ENCODE measurements at regions of chr14 and their contacts with region 1.

Region 1: DNA sequence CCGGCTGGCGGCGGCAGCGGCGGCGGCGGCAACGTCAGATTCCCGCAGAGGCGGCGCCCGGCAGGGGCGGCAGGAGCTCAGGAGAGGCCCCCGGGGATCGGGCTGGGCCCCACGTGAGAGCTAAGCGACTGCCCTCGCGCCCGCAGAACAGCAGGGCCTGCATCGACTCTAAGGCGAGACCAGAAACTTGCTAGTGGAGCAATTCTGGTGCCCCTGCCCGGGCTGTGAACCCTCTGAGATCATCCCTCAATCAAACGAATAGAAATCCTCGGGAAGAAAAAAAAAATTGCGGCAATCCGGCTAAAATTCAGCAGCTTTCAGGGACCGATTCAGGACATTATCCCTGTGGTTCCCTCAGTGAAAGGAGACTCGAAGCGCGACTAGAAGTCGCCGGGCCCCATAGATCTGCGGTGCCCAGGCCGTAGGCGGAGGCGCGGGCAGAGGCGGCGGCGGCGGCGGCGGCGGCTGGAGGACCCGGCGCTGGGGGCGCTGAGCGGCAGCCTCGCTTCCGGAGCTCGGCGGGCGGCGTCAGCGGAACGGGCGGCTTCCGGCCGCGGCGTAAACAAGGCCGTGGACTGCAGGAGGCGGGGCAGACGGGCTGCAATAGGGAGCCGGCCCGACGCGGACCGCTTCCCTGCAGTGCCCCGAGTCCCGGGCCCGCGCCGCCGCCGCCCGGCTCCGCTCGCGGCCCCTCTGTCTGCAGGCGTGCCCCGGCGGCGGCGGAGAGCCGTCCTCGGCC is at the start of gene KLHDC2:
- DNase-seq: peak; percentile 99
- H3K4me3 ChIP-seq: peak within 1 kb of the TSS; percentile 68 to 89 (median 83)
- H3K27ac ChIP-seq: peak within 1 kb of the TSS; percentile 89 to 100 (median 98)
- H3K4me1 ChIP-seq: peaks cover 16 to 46% (median 30%) of the 10 kb centered on the region in 6 donors
- H3K27me3 ChIP-seq: no peaks in the 10 kb centered on the region
- CTCF ChIP-seq: peak in 7 of 11 experiments; percentile 5 to 69 (median 44)
- POLR2A ChIP-seq: peak; percentile 14 to 94 (median 35)
- total RNA-seq, gene KLHDC2: 31.9 to 66.8 (median 47.9) TPM

Region 2: GRCh38 chr14:49633640-49634546 is 133.8 kb before region 1 on chr14:
- intact Hi-C with region 1: loop called (anchors 10 kb)
- DNase-seq: peak; percentile 99
- H3K4me3 ChIP-seq: peak overlapping the region; percentile 90 to 99 (median 97)
- H3K27ac ChIP-seq: peak overlapping the region; percentile 94 to 99 (median 98)
- H3K4me1 ChIP-seq: peaks cover 20 to 89% (median 51%) of the 10 kb centered on the region in 6 donors
- H3K27me3 ChIP-seq: no peaks in the 10 kb centered on the region
- CTCF ChIP-seq: peak; percentile 74 to 95 (median 90)
- POLR2A ChIP-seq: peak; percentile 6 to 81 (median 62)

Region 3: DNA sequence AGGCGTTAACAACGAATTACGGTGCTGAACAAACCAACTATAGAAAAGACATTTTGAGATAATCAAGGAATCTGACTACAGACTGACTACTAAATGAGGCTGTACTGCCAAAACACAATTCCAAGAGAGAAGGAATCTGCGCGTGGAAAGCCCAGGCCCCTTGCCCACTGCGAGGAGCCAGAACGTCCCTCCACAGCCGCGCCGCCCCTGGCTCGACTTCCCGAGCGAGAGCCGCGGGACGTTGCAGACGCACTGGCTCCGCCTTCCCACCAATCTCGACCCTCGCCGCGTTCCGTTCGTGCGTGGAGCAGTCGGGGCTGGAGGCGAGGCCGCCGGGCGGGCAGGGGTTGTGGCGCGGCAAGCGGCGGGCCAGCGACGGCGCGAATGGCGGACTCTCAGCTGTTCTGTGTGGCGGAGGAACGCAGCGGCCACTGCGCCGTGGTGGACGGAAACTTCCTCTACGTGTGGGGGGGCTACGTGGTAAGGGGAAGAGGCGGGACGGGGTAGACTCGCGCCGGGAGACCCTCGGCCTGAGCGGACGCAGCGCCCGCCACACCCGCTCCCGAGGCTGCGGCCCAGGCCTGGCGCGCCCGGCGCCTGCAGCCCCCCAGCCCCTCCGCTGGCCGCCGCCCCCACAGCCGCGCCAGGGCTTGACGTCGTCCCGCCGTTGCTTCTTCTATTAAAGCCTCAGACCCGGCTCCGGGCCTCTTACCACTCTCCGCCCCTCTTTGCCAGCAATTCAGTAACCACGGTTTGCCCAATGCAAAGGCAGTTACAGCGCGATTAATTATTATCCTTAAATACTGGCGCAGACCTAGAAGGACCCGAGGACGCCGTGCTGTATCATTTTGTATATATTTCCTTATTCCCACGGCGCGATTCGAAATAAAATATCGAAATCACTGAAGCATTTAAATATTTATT is 74.7 kb before region 1 on chr14 and contains the start of gene KLHDC1:
- intact Hi-C with region 1: loop called (anchors 10 kb)
- DNase-seq: peak; percentile 97
- H3K4me3 ChIP-seq: peak within 1 kb of the TSS; percentile 45 to 92 (median 68)
- H3K27ac ChIP-seq: peak within 1 kb of the TSS; percentile 90 to 97 (median 94)
- H3K4me1 ChIP-seq: peaks cover 4 to 48% (median 23%) of the 10 kb centered on the region in 6 donors
- H3K27me3 ChIP-seq: no peaks in the 10 kb centered on the region
- CTCF ChIP-seq: no peak
- POLR2A ChIP-seq: peak; percentile 27 to 92 (median 64)
- total RNA-seq, gene KLHDC1: 5.9 to 12.8 (median 10.2) TPM